A549 (cell line): ENCODE measurements at regions of chr17 and their contacts with region 1.

Region 1: GRCh38 chr17:42508426-42509165 is 27.4 kb upstream of the NAGLU start:
- DNase-seq: no peak
- ATAC-seq: no peak
- H3K4me3 ChIP-seq: no peak overlapping the region
- H3K27ac ChIP-seq: no peak overlapping the region
- H3K4me1 ChIP-seq: no peaks in the 10 kb centered on the region
- CTCF ChIP-seq: no peak
- EP300 ChIP-seq: no peak
- POLR2A ChIP-seq: no peak
- RAD21 ChIP-seq: no peak

Region 2: DNA sequence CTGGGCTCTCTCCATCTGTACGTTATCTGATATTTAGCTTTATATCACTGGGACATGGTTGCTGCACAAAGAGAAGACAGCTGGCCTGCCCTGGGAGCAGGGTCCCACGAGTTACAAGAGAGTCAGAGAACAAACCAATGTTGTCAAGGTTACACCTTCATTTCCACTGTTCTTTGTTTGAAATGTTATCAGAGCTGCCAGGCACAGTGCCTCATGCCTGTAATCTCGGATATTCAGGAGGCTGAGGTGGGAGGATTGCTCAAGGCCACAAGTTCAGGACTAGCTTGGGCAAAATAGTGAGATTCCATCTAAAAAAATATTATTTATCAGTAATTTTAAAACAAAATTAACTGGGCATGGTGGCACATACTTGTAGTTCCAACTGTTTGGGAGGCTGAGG is 15.3 kb before region 1 on chr17:
- CTCF ChIA-PET with region 1: interaction called, 18 read pairs
- POLR2A ChIA-PET with region 1: no interaction called
- DNase-seq: no peak
- ATAC-seq: no peak
- H3K4me3 ChIP-seq: no peak overlapping the region
- H3K27ac ChIP-seq: no peak overlapping the region
- H3K4me1 ChIP-seq: no peaks in the 10 kb centered on the region
- CTCF ChIP-seq: no peak
- EP300 ChIP-seq: no peak
- POLR2A ChIP-seq: no peak
- RAD21 ChIP-seq: no peak